Activated CD4-positive, alpha-beta T cell treated with anti-CD3 and anti-CD28 coated beads, Interleukin-2, amount 10 ng/mL, durations not matched to agents 24 days and 14 days (primary cell): ENCODE measurements at regions of chrX and their contacts with region 1.

Region 1: GRCh38 chrX:132615391-132616131 is 126.7 kb upstream of the MBNL3 start:
- DNase-seq: peak; percentile 78
- H3K4me3 Mint-ChIP-seq: no peak overlapping the region
- H3K27ac Mint-ChIP-seq: no peak overlapping the region
- H3K4me1 Mint-ChIP-seq: no peaks in the 10 kb centered on the region
- H3K27me3 Mint-ChIP-seq: no peaks in the 10 kb centered on the region

Region 2: DNA sequence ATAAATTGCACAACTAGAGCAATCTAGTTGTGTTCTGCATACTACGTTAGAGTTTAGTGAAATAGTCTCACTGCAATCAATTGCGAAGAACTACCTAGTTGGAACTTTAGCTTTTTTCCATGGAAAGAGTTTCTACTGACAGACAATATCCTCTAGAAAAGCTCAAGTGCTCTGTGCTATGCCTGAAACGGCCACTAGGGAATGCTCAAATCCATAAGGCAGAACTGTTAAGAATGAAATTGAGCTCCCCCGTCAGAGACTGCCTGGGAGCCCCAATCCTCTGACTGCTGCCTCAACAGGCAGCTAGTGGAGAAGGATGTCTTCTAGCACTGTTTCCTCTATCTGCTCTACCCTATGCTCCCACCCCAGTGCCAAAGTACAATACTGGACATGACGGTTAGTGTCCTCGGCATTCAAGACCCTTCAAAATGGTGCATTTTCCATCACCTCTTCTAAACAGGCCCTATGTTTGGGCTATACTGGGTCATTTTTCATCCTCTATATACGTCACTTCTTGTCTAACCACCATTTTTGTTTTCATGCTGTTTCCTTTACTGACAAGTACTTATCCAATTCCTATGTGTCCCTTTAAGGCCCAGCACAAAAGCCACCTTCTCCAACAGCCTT is 523.0 kb before region 1 on chrX:
- intact Hi-C with region 1: loop called (anchors 10 kb)
- DNase-seq: peak; percentile 79
- H3K4me3 Mint-ChIP-seq: no peak overlapping the region
- H3K27ac Mint-ChIP-seq: no peak overlapping the region
- H3K4me1 Mint-ChIP-seq: peaks cover 11% of the 10 kb centered on the region
- H3K27me3 Mint-ChIP-seq: peaks cover under 1% of the 10 kb centered on the region

Region 3: GRCh38 chrX:132226169-132226568 is 389.4 kb before region 1 on chrX:
- intact Hi-C with region 1: loop called (anchors 5 kb)
- DNase-seq: no peak
- H3K4me3 Mint-ChIP-seq: no peak overlapping the region
- H3K27ac Mint-ChIP-seq: no peak overlapping the region
- H3K4me1 Mint-ChIP-seq: peaks cover 5% of the 10 kb centered on the region
- H3K27me3 Mint-ChIP-seq: no peaks in the 10 kb centered on the region

Region 4: DNA sequence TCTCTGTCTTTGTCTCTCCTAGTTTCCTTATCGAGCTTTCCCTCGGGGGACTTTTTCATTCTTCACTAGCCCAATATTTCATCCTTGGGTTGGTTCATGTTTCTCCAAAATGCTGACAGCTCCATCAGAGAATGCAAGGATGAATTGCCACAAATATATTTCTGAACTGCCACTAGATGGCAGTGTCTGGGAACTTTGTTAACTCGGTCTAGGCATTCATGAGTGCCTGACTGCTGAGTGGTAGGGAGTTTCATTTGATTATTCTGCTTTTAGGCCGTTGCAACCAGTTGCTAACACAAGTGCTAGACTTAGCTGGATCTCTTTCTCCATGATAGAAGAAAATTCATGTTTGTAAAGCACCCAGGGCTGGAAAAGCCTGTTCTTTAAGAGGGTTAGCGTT is 322.8 kb before region 1 on chrX:
- intact Hi-C with region 1: loop called (anchors 2 kb)
- DNase-seq: peak; percentile 67
- H3K4me3 Mint-ChIP-seq: no peak overlapping the region
- H3K27ac Mint-ChIP-seq: no peak overlapping the region
- H3K4me1 Mint-ChIP-seq: no peaks in the 10 kb centered on the region
- H3K27me3 Mint-ChIP-seq: peaks cover under 1% of the 10 kb centered on the region